ENCODE measurements at regions of chr4 and their contacts with region 1.

Region 1: GRCh38 chr4:6640292-6641163 is at the start of gene MRFAP1:
- DNase-seq: peak; percentile 96
- H3K4me3 ChIP-seq: peak within 1 kb of the TSS; percentile 79 to 91 (median 83)
- H3K27ac ChIP-seq: peak within 1 kb of the TSS; percentile 87 to 98 (median 96)
- H3K4me1 ChIP-seq: peaks cover 32 to 37% (median 35%) of the 10 kb centered on the region in 4 donors
- H3K27me3 ChIP-seq: no peaks in the 10 kb centered on the region
- CTCF ChIP-seq: no peak
- EP300 ChIP-seq: no peak
- POLR2A ChIP-seq: peak; percentile 87
- total RNA-seq, gene MRFAP1: 155 to 331 (median 234) TPM

Region 2: DNA sequence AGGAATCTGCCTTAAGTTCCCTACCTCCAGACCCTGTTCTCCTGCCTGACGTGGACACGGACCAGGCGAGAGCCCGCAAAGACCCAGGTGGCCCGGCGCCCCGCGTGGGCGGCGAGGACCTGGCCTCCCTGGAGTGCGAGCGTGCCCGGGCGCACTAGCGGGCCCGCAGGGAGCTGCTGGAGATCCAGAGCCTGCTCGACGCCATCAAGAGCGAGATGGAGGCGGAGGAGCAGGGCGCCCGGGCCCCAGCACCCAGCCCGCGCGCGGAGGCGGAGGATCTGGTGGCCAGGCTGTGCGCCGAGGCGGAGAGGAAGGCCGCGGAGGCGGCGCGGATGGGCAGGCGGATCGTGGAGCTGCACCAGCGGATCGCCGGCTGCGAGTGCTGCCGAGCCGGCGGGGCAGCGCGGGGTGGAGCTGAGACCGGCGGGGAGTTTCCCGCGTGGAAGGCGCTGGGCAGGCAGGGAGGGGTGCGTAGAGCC is 18.1 kb after region 1 on chr4:
- intact Hi-C with region 1: loop called (anchors 2 kb)
- DNase-seq: no peak
- H3K4me3 ChIP-seq: peak overlapping the region; percentile 52 to 58 (median 56)
- H3K27ac ChIP-seq: peak overlapping the region; percentile 71 to 79 (median 76)
- H3K4me1 ChIP-seq: peaks cover 10 to 18% (median 17%) of the 10 kb centered on the region in 4 donors
- H3K27me3 ChIP-seq: peaks cover 0 to under 1% (median 0%) of the 10 kb centered on the region in 4 donors
- CTCF ChIP-seq: no peak
- EP300 ChIP-seq: no peak
- POLR2A ChIP-seq: no peak

Region 3: DNA sequence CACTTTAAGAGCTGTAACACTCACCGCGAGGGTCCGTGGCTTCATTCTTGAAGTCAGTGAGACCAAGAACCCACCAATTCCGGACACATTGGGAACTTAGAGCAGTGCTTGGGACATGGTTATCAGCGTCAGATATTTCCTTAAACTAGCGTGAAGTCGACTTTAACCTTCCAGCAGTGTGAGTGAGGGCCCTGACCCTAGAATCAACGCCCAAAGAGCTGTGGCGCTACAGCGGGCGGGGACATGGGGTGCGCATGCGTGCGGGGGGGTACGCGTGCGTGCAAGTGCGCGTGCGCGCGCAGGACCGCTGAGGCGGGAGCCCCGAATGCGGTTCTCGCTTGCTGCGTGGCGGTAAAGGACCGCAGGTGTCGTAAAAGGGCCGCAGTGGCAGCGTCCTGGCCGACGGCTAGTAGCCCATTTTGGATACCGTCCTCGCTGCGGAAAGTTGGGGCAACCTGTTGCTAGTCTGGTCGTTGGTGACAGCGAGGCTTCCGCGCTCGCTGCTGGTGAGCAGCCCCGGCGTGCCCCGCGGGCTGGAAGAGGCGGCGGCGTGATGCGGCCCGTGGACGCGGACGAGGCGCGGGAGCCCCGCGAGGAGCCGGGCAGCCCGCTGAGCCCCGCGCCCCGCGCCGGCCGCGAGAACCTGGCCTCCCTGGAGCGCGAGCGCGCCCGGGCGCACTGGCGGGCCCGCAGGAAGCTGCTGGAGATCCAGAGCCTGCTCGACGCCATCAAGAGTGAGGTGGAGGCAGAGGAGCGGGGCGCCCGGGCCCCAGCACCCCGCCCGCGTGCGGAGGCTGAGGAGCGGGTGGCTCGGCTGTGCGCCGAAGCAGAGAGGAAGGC is 33.4 kb after region 1 on chr4:
- intact Hi-C with region 1: loop called (anchors 5 kb)
- DNase-seq: peak; percentile 96
- H3K4me3 ChIP-seq: peak overlapping the region; percentile 81 to 96 (median 82)
- H3K27ac ChIP-seq: peak overlapping the region; percentile 85 to 93 (median 88)
- H3K4me1 ChIP-seq: peaks cover 27 to 48% (median 46%) of the 10 kb centered on the region in 4 donors
- H3K27me3 ChIP-seq: no peaks in the 10 kb centered on the region
- CTCF ChIP-seq: peak in 1 of 3 experiments; percentile 6
- EP300 ChIP-seq: no peak
- POLR2A ChIP-seq: no peak

Region 4: GRCh38 chr4:6709230-6710114 is 68.9 kb after region 1 on chr4 and contains the start of gene MRFAP1L1:
- intact Hi-C with region 1: loop called (anchors 2 kb)
- DNase-seq: peak; percentile 98
- H3K4me3 ChIP-seq: peak within 1 kb of the TSS; percentile 69 to 79 (median 73)
- H3K27ac ChIP-seq: peak within 1 kb of the TSS; percentile 76 to 89 (median 84)
- H3K4me1 ChIP-seq: peaks cover 35 to 52% (median 52%) of the 10 kb centered on the region in 4 donors
- H3K27me3 ChIP-seq: no peaks in the 10 kb centered on the region
- CTCF ChIP-seq: peak in 2 of 3 experiments; percentile 22 to 30
- EP300 ChIP-seq: no peak
- POLR2A ChIP-seq: no peak
- total RNA-seq, gene MRFAP1L1: 55.2 to 60.0 (median 57.0) TPM